MCF 10A (cell line): ENCODE measurements at regions of chr2 and their contacts with region 1.

Region 1: DNA sequence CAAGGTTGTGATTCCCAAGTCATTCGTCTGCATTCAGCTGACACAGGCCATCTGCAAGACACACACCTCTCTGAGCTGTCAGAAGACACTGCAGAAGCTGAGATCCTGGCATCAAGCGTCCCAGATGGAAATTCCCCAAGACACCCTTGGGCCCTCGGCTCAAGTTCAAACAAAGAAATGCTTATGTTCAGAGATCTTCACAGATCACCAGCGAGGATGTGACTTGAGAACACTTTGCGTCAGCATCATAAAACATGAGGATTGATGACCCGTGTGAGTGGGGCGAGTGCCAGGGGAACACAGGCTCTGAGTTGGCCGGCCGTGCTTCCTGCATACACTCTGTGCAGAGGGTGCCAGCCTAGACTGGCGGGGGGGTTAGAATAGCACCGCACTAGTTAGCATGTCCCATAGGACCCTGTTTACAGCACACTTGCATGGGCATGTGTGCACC is 36.8 kb downstream of the KCNIP3 start:
- DNase-seq: peak; percentile 99
- H3K4me3 Mint-ChIP-seq: peak overlapping the region; percentile 52
- H3K27ac Mint-ChIP-seq: peak overlapping the region; percentile 94
- H3K4me1 Mint-ChIP-seq: peaks cover 44% of the 10 kb centered on the region
- H3K27me3 Mint-ChIP-seq: no peaks in the 10 kb centered on the region
- CTCF ChIP-seq: no peak

Region 2: GRCh38 chr2:95314964-95315611 is 18.8 kb before region 1 on chr2:
- CTCF ChIA-PET with region 1: interaction called, 10 read pairs
- POLR2A ChIA-PET with region 1: interaction called, 18 read pairs
- intact Hi-C with region 1: no loop called
- DNase-seq: peak; percentile 80
- H3K4me3 Mint-ChIP-seq: peak overlapping the region; percentile 36
- H3K27ac Mint-ChIP-seq: peak overlapping the region; percentile 86
- H3K4me1 Mint-ChIP-seq: peaks cover 52% of the 10 kb centered on the region
- H3K27me3 Mint-ChIP-seq: no peaks in the 10 kb centered on the region
- CTCF ChIP-seq: peak; percentile 83

Region 3: GRCh38 chr2:95323347-95324185 is 10.3 kb before region 1 on chr2:
- CTCF ChIA-PET with region 1: interaction called, 14 read pairs
- POLR2A ChIA-PET with region 1: interaction called, 4 read pairs
- intact Hi-C with region 1: no loop called
- DNase-seq: peak; percentile 80
- H3K4me3 Mint-ChIP-seq: no peak overlapping the region
- H3K27ac Mint-ChIP-seq: no peak overlapping the region
- H3K4me1 Mint-ChIP-seq: peaks cover 10% of the 10 kb centered on the region
- H3K27me3 Mint-ChIP-seq: no peaks in the 10 kb centered on the region
- CTCF ChIP-seq: peak; percentile 76